AG04450 (cell line): ENCODE measurements at regions of chr6 and their contacts with region 1.

Region 1: DNA sequence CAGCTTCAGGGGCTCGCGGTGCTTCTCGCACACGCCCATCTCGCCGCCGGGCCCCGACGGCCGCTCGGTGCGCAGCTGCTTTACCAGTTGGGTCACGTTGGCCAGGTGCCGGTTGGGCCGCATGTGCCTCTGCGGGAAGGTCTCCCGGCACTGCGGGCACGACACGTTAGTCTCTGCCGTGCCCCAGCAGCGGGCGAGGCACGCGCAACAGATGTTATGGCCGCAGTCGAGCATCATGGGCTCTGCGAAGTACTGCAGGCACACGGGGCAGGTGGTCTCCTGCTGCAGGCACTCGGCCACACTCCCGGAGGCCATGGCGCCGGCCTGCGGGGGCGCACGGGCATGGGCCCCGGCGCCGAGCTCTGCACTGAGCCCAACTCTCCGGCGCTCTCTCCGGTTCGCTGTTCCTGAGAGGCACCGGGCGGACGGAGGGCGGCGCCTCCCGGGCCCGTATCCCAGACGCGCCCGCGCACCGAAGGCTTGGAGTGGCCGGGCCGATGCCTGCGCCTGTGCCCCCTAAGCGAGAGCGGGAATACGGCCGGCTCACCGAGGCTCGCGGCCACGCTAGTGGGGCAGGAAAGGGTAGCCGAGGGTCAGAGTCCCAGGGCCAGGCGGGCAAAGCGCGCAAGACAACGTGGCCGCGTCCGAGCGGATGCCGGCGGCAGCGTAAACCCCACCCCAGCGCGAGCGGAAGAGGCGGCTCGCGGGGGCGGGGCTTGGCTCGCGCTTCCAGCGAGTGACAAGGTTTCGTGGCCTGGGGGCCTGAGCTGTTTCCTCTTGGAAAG is at the start of gene TRIM27:
- DNase-seq: peak; percentile 37
- H3K4me3 ChIP-seq: peak within 1 kb of the TSS; percentile 97
- H3K27ac ChIP-seq: peak within 1 kb of the TSS; percentile 80
- H3K27me3 ChIP-seq: no peaks in the 10 kb centered on the region
- CTCF ChIP-seq: no peak
- polyA plus RNA-seq, gene TRIM27: 62.0 and 73.8 TPM in 2 replicates

Region 2: GRCh38 chr6:28789553-28790083 is 133.9 kb before region 1 on chr6:
- CTCF ChIA-PET with region 1: no interaction called
- POLR2A ChIA-PET with region 1: no interaction called
- DNase-seq: no peak
- H3K4me3 ChIP-seq: peak overlapping the region; percentile 59
- H3K27ac ChIP-seq: no peak overlapping the region
- H3K27me3 ChIP-seq: peaks cover 27% of the 10 kb centered on the region
- CTCF ChIP-seq: no peak

Region 3: GRCh38 chr6:28816909-28817807 is 106.4 kb before region 1 on chr6:
- CTCF ChIA-PET with region 1: no interaction called
- POLR2A ChIA-PET with region 1: no interaction called
- DNase-seq: peak; percentile 38
- H3K4me3 ChIP-seq: peak overlapping the region; percentile 31
- H3K27ac ChIP-seq: no peak overlapping the region
- H3K27me3 ChIP-seq: peaks cover 24% of the 10 kb centered on the region
- CTCF ChIP-seq: no peak

Region 4: DNA sequence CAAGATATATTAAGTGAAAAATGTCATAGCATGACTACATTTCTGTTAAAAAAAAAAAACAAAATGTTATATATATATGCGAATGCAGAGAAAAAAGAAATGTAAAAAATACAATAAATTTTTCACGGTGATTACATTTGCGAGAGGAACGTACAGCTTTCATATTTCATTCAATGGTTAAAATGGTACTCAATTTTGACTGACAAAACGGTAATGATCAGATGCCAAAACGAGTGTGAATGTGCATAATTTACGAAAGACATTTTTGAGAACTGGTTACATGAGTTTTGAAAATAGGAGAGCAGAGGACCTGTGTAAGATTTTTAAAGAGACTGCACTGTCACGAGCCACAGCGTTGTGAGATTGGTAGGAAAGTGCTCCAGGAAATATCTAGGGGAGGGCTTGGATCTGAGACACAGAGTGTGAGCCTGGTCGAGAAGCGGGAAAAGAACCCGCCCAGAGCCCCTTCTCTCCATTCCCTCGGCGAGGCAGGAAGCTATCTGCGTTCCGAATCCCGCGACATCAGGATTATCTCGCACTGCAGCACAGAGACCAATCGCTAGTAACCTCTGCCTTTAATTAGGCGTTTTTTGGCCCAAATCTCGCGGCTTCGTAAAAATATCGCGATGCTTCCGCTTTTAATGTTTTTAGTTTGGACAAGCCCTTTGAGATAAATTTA is 28.2 kb before region 1 on chr6:
- CTCF ChIA-PET with region 1: interaction called, 4 read pairs
- POLR2A ChIA-PET with region 1: interaction called, 30 read pairs
- DNase-seq: peak; percentile 90
- H3K4me3 ChIP-seq: peak overlapping the region; percentile 79
- H3K27ac ChIP-seq: peak overlapping the region; percentile 98
- H3K27me3 ChIP-seq: no peaks in the 10 kb centered on the region
- CTCF ChIP-seq: no peak

Region 5: GRCh38 chr6:28907394-28907793 is 16.1 kb before region 1 on chr6:
- CTCF ChIA-PET with region 1: interaction called, 5 read pairs
- POLR2A ChIA-PET with region 1: interaction called, 14 read pairs
- DNase-seq: peak; percentile 69
- H3K4me3 ChIP-seq: no peak overlapping the region
- H3K27ac ChIP-seq: peak overlapping the region; percentile 11
- H3K27me3 ChIP-seq: no peaks in the 10 kb centered on the region
- CTCF ChIP-seq: no peak